ENCODE measurements at regions of chr20 and their contacts with region 1.

Region 1: GRCh38 chr20:1965520-1966351 is 28.1 kb downstream of the PDYN start:
- DNase-seq: peak in 1 of 2 experiments; percentile 55
- H3K4me3 ChIP-seq: no peak overlapping the region
- H3K27ac ChIP-seq: no peak overlapping the region
- H3K4me1 ChIP-seq: no peaks in the 10 kb centered on the region
- H3K27me3 ChIP-seq: peaks cover 75% of the 10 kb centered on the region
- CTCF ChIP-seq: peak; percentile 96

Region 2: DNA sequence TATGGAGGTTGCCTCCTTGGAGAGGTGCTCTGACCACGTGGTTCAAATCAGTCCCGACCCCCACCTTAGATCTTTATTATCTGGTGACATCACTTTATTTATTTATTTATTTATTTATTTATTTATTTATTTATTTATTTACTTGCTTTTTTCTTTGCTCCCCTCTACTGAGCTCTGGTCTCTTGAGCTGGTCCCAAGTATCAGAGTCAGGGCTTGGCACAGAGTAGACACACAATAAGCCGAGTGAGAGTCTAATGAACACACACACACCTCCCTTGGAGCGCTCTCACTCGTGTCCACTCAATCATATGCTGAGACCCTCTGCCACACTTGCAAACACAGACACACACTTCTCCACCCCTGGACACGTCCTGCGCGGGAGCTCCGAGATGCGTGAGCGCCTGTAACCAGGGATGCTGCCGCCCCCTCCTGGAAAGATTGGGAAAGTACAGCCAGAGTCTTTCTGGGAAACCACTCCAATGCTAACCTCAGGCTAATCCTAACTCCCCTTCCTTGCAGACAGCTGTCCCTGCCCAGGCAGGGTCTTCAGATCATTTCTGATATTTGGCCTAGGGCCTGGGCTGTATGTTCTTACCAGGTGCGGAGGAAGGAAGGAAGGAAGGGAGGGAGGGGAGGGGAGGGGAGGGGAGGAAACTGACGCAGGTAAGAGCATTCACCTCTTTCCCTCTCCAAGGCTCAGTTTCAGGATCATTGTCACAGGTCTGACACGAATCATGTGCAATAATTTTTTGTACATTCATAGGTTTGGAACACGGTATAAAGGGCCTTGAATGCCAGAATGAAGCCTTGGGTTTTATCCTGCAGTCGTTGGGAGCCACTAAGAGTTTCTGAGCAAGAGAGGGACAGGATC is 206.8 kb after region 1 on chr20:
- CTCF ChIA-PET with region 1: no interaction called
- POLR2A ChIA-PET with region 1: no interaction called
- intact Hi-C with region 1: loop called (anchors 1 kb)
- DNase-seq: peak in 1 of 2 experiments; percentile 63
- H3K4me3 ChIP-seq: no peak overlapping the region
- H3K27ac ChIP-seq: no peak overlapping the region
- H3K4me1 ChIP-seq: no peaks in the 10 kb centered on the region
- H3K27me3 ChIP-seq: peaks cover 11% of the 10 kb centered on the region; the same call in 1 of the 2 replicates
- CTCF ChIP-seq: peak; percentile 97

Region 3: GRCh38 chr20:2206957-2207769 is 241.4 kb after region 1 on chr20:
- CTCF ChIA-PET with region 1: no interaction called
- POLR2A ChIA-PET with region 1: interaction called, 24 read pairs
- intact Hi-C with region 1: no loop called
- DNase-seq: peak in 1 of 2 experiments; percentile 60
- H3K4me3 ChIP-seq: no peak overlapping the region
- H3K27ac ChIP-seq: no peak overlapping the region
- H3K4me1 ChIP-seq: no peaks in the 10 kb centered on the region
- H3K27me3 ChIP-seq: peaks cover 26% of the 10 kb centered on the region
- CTCF ChIP-seq: 0 out of 2 replicates have a peak, but pooled peaks have one; percentile 28

Region 4: GRCh38 chr20:2451939-2452732 is 486.4 kb after region 1 on chr20:
- CTCF ChIA-PET with region 1: no interaction called
- POLR2A ChIA-PET with region 1: no interaction called
- intact Hi-C with region 1: loop called (anchors 5 kb)
- DNase-seq: peak; percentile 47 to 67
- H3K4me3 ChIP-seq: no peak overlapping the region
- H3K27ac ChIP-seq: no peak overlapping the region
- H3K4me1 ChIP-seq: no peaks in the 10 kb centered on the region
- H3K27me3 ChIP-seq: peaks cover 8% of the 10 kb centered on the region; the same call in 1 of the 2 replicates
- CTCF ChIP-seq: peak; percentile 89

Measured in PC-9 (cell line).